ENCODE measurements at regions of chr10 and their contacts with region 1.

Region 1: GRCh38 chr10:42753126-42753506 is 29.5 kb upstream of the BMS1 start:
- DNase-seq: peak; percentile 16
- H3K4me3 ChIP-seq: peak overlapping the region; percentile 37
- H3K27ac ChIP-seq: no peak overlapping the region
- H3K27me3 ChIP-seq: peaks cover 37% of the 10 kb centered on the region
- CTCF ChIP-seq: peak; percentile 82

Region 2: GRCh38 chr10:42475168-42476098 is 277.7 kb before region 1 on chr10:
- CTCF ChIA-PET with region 1: no interaction called
- POLR2A ChIA-PET with region 1: no interaction called
- DNase-seq: no peak
- H3K4me3 ChIP-seq: peak overlapping the region; percentile 55
- H3K27ac ChIP-seq: no peak overlapping the region
- H3K27me3 ChIP-seq: no peaks in the 10 kb centered on the region
- CTCF ChIP-seq: no peak

Region 3: GRCh38 chr10:42782446-42783180 is 29.5 kb after region 1 on chr10 and contains the start of gene BMS1:
- CTCF ChIA-PET with region 1: interaction called, 13 read pairs
- POLR2A ChIA-PET with region 1: interaction called, 10 read pairs
- DNase-seq: peak; percentile 81
- H3K4me3 ChIP-seq: peak within 1 kb of the TSS; percentile 86
- H3K27ac ChIP-seq: peak within 1 kb of the TSS; percentile 95
- H3K27me3 ChIP-seq: no peaks in the 10 kb centered on the region
- CTCF ChIP-seq: no peak
- polyA plus RNA-seq, gene BMS1: 7.4 and 8.8 TPM in 2 replicates

Region 4: GRCh38 chr10:43093423-43094076 is 340.4 kb after region 1 on chr10:
- CTCF ChIA-PET with region 1: no interaction called
- POLR2A ChIA-PET with region 1: no interaction called
- DNase-seq: no peak
- H3K4me3 ChIP-seq: no peak overlapping the region
- H3K27ac ChIP-seq: no peak overlapping the region
- H3K27me3 ChIP-seq: peaks cover 21% of the 10 kb centered on the region
- CTCF ChIP-seq: no peak